Aorta (tissue), 5 donors: ENCODE measurements at regions of chr3 and their contacts with region 1.

Region 1: GRCh38 chr3:150798122-150798626 is 35.2 kb upstream of the SIAH2 start:
- DNase-seq: no peak
- ATAC-seq: no peak
- H3K4me3 ChIP-seq: no peak overlapping the region
- H3K27ac ChIP-seq: no peak overlapping the region
- H3K4me1 ChIP-seq: no peaks in the 10 kb centered on the region
- H3K27me3 ChIP-seq: no peaks in the 10 kb centered on the region

Region 2: GRCh38 chr3:151156618-151157216 is 358.5 kb after region 1 on chr3:
- intact Hi-C with region 1: loop called in 1 of 2 experiments (anchors 5 kb)
- DNase-seq: no peak
- ATAC-seq: no peak
- H3K4me3 ChIP-seq: no peak overlapping the region
- H3K27ac ChIP-seq: no peak overlapping the region
- H3K4me1 ChIP-seq: no peaks in the 10 kb centered on the region
- H3K27me3 ChIP-seq: no peaks in the 10 kb centered on the region

Region 3: DNA sequence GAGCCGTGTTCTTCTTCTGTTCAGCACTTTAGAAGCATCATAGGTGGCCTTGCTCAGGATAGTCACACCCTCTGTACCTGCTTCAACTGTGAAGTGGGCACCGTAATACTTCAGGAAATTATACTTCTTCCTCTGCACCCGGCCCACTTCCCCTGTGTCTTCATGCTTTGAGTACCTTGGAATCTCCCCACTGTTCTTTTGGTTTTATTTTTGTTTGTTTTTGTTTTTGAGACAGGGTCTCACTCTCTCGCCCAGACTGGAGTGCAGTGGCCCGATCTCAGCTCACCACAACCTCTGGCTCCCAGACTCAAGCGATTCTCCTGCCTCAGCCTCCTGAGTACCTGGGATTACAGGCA is 478.5 kb after region 1 on chr3:
- intact Hi-C with region 1: loop called in 1 of 2 experiments (anchors 10 kb)
- DNase-seq: no peak
- ATAC-seq: peak; percentile 24
- H3K4me3 ChIP-seq: no peak overlapping the region
- H3K27ac ChIP-seq: no peak overlapping the region
- H3K4me1 ChIP-seq: peaks cover 0 to 1% of the 10 kb centered on the region in 2 donors
- H3K27me3 ChIP-seq: no peaks in the 10 kb centered on the region